Caco-2 (cell line): ENCODE measurements at regions of chr1 and their contacts with region 1.

Region 1: DNA sequence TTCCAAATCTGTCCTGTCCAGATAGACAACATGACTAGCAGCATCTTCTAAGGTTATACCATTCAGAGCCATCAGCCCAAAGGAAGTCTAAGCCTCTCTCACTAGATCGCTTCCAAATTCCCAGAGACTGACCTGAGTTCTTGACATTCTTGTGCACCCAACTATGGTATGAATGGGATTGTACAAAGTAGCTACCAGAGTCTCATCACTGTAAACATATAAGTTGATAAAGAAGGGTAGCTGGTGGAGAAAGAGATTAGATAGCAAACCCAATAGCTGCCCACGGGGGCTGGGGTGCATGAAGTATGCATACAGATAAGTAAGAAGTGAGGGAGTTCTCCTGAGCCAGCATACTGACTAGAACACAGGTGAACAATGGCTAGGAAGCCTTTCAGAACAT is 180.0 kb downstream of the PLPP3 start:
- DNase-seq: peak; percentile 51 to 71
- H3K4me3 ChIP-seq: no peak overlapping the region
- H3K4me3 Mint-ChIP-seq: peak overlapping the region; percentile 19
- H3K27ac Mint-ChIP-seq: peak overlapping the region; percentile 58
- H3K4me1 ChIP-seq: peaks cover 30% of the 10 kb centered on the region
- H3K4me1 Mint-ChIP-seq: peaks cover 16% of the 10 kb centered on the region
- H3K27me3 ChIP-seq: no peaks in the 10 kb centered on the region
- H3K27me3 Mint-ChIP-seq: no peaks in the 10 kb centered on the region
- CTCF ChIP-seq: no peak

Region 2: GRCh38 chr1:55938376-55938850 is 460.9 kb before region 1 on chr1:
- CTCF ChIA-PET with region 1: no interaction called
- POLR2A ChIA-PET with region 1: no interaction called
- intact Hi-C with region 1: no loop called
- DNase-seq: no peak
- H3K4me3 ChIP-seq: no peak overlapping the region
- H3K4me3 Mint-ChIP-seq: no peak overlapping the region
- H3K27ac Mint-ChIP-seq: no peak overlapping the region
- H3K4me1 ChIP-seq: no peaks in the 10 kb centered on the region
- H3K4me1 Mint-ChIP-seq: no peaks in the 10 kb centered on the region
- H3K27me3 ChIP-seq: no peaks in the 10 kb centered on the region
- H3K27me3 Mint-ChIP-seq: no peaks in the 10 kb centered on the region
- CTCF ChIP-seq: no peak

Region 3: DNA sequence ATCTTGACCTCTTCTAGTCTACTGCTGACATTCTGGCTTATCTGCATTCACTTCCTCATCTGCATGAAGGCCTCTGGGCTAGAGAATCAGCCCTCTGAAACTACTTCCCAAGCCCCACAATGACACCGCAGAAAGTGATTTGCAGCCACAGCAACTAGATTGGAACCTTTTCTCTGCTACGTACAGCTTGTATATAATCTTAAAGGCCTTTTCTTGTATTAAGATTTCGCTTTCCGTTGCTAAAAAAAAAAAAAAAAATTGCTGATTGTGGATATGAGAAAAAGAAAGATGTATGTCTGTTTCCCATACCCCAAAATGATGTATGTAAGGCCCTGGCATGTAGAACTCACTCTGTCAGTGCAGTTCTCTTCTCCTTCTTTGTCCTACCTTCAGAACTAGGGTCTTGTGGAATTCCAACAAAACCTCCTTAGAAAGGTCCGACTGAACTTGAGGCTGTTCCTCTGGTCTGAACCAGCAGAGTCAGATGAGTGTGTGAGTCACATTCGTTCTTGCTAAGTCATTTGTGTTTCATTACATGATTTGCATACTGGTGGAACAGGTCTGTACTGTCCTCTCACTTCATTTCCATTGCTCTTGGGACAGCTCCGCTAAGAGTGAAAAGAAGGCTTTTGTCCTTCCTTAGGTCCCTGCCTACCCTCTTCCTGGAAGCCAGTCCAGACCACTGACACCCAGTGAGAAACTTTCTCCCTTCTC is 117.4 kb after region 1 on chr1:
- CTCF ChIA-PET with region 1: no interaction called
- POLR2A ChIA-PET with region 1: interaction called, 17 read pairs
- intact Hi-C with region 1: no loop called
- DNase-seq: peak; percentile 62 to 70
- H3K4me3 ChIP-seq: no peak overlapping the region
- H3K4me3 Mint-ChIP-seq: peak overlapping the region; percentile 47
- H3K27ac Mint-ChIP-seq: peak overlapping the region; percentile 42
- H3K4me1 ChIP-seq: peaks cover 39% of the 10 kb centered on the region
- H3K4me1 Mint-ChIP-seq: peaks cover 33% of the 10 kb centered on the region
- H3K27me3 ChIP-seq: no peaks in the 10 kb centered on the region
- H3K27me3 Mint-ChIP-seq: no peaks in the 10 kb centered on the region
- CTCF ChIP-seq: no peak